OCI-LY7 (cell line): ENCODE measurements at regions of chr3 and their contacts with region 1.

Region 1: GRCh38 chr3:9396700-9397521 is 504 bp upstream of the SETD5 start:
- DNase-seq: peak; percentile 99
- H3K4me3 ChIP-seq: peak overlapping the region; percentile 96
- H3K27ac ChIP-seq: peak overlapping the region; percentile 87
- H3K4me1 ChIP-seq: peaks cover 59% of the 10 kb centered on the region
- CTCF ChIP-seq: no peak

Region 2: DNA sequence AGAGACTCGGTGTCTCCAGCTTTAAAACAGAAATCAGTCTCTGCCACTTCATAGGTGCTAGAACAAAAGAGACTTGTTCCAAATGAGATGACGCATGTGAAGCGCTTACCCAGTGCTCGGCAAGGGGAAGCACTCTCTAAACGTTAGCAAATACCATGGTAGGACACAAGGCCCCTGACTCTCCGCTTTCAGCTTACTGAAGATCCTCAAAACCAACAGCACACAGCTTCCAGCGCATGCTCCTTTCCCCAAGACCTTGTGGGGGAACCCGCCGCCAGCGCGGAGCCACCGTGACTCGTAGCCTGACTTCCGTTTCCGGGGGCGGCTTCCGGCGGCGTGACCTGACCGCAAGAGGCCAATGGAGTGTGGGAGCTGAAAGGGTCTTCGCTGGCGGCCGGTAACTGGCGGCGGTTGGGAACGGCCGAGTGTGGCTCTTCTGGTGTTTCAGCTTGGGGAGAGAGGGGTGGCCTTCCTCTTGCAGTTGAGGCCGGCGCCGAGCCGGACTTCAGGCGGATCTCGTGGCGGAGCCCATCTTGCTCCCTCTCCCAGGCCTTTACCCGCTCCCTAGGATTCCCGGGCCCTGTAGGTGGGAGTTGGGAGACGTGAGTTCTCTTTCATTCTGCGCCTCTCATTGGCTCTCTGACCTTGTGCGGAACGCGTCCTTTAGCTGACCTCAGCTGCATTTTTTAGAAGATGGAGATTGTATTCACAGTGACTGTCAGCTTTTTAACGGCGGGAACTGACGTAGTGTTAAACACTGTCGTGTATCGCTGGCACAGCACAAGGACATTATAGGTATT is 34.0 kb before region 1 on chr3 and contains the start of gene THUMPD3:
- CTCF ChIA-PET with region 1: no interaction called
- POLR2A ChIA-PET with region 1: interaction called, 64 read pairs
- intact Hi-C with region 1: loop called (anchors 1 kb)
- DNase-seq: peak; percentile 90
- H3K4me3 ChIP-seq: peak within 1 kb of the TSS; percentile 77
- H3K27ac ChIP-seq: peak within 1 kb of the TSS; percentile 70
- H3K4me1 ChIP-seq: peaks cover 14% of the 10 kb centered on the region
- CTCF ChIP-seq: no peak
- total RNA-seq, gene THUMPD3: 12.4 and 20.7 TPM in 2 replicates

Region 3: GRCh38 chr3:9409981-9410854 is 13.3 kb after region 1 on chr3:
- CTCF ChIA-PET with region 1: no interaction called
- POLR2A ChIA-PET with region 1: interaction called, 12 read pairs
- intact Hi-C with region 1: no loop called
- DNase-seq: no peak
- H3K4me3 ChIP-seq: no peak overlapping the region
- H3K27ac ChIP-seq: no peak overlapping the region
- H3K4me1 ChIP-seq: peaks cover 31% of the 10 kb centered on the region
- CTCF ChIP-seq: no peak

Region 4: GRCh38 chr3:9416139-9416780 is 19.3 kb after region 1 on chr3:
- CTCF ChIA-PET with region 1: no interaction called
- POLR2A ChIA-PET with region 1: interaction called, 12 read pairs
- intact Hi-C with region 1: no loop called
- DNase-seq: no peak
- H3K4me3 ChIP-seq: no peak overlapping the region
- H3K27ac ChIP-seq: no peak overlapping the region
- H3K4me1 ChIP-seq: no peaks in the 10 kb centered on the region
- CTCF ChIP-seq: no peak

Region 5: GRCh38 chr3:9731206-9732079 is 334.5 kb after region 1 on chr3 and contains the start of gene BRPF1:
- CTCF ChIA-PET with region 1: interaction called, 3 read pairs
- POLR2A ChIA-PET with region 1: interaction called, 3 read pairs
- intact Hi-C with region 1: loop called (anchors 5 kb)
- DNase-seq: peak; percentile 98
- H3K4me3 ChIP-seq: peak within 1 kb of the TSS; percentile 96
- H3K27ac ChIP-seq: peak within 1 kb of the TSS; percentile 60
- H3K4me1 ChIP-seq: peaks cover 28% of the 10 kb centered on the region
- CTCF ChIP-seq: no peak
- total RNA-seq, gene BRPF1: 29.2 and 31.9 TPM in 2 replicates

Region 6: GRCh38 chr3:9792405-9793160 is 395.7 kb after region 1 on chr3 and contains the starts of genes ARPC4 and TADA3:
- CTCF ChIA-PET with region 1: no interaction called
- POLR2A ChIA-PET with region 1: no interaction called
- intact Hi-C with region 1: loop called (anchors 2 kb)
- DNase-seq: peak; percentile 98
- H3K4me3 ChIP-seq: peak within 1 kb of the TSS; percentile 96
- H3K27ac ChIP-seq: peak within 1 kb of the TSS; percentile 72
- H3K4me1 ChIP-seq: peaks cover 47% of the 10 kb centered on the region
- CTCF ChIP-seq: no peak
- total RNA-seq, gene ARPC4: 89.8 and 99.5 TPM in 2 replicates
- total RNA-seq, gene TADA3: 51.6 and 62.0 TPM in 2 replicates